ENCODE measurements at regions of chr22 and their contacts with region 1.

Region 1: GRCh38 chr22:32080904-32081303 is 37.8 kb downstream of the SLC5A1 start:
- DNase-seq: no peak
- ATAC-seq: peak; percentile 81 to 83 (median 81)
- H3K4me3 ChIP-seq: no peak overlapping the region
- H3K27ac ChIP-seq: no peak overlapping the region
- H3K4me1 ChIP-seq: peaks cover 17% of the 10 kb centered on the region
- H3K27me3 ChIP-seq: peaks cover 0 to 1% (median 0%) of the 10 kb centered on the region in 3 donors
- CTCF ChIP-seq: peak; percentile 78

Region 2: GRCh38 chr22:31970490-31971444 is 110.1 kb before region 1 on chr22:
- intact Hi-C with region 1: loop called in 1 of 2 experiments (anchors 2 kb)
- DNase-seq: peak; percentile 78 to 90
- ATAC-seq: peak; percentile 93 to 99 (median 96)
- H3K4me3 ChIP-seq: peak overlapping the region; percentile 67
- H3K27ac ChIP-seq: no peak overlapping the region
- H3K4me1 ChIP-seq: peaks cover 5% of the 10 kb centered on the region
- H3K27me3 ChIP-seq: no peaks in the 10 kb centered on the region
- CTCF ChIP-seq: peak; percentile 93

Region 3: GRCh38 chr22:31977141-31977841 is 103.6 kb before region 1 on chr22:
- intact Hi-C with region 1: loop called (anchors 1 to 2 kb)
- DNase-seq: peak; percentile 70 to 87
- ATAC-seq: peak; percentile 93 to 97 (median 95)
- H3K4me3 ChIP-seq: no peak overlapping the region
- H3K27ac ChIP-seq: no peak overlapping the region
- H3K4me1 ChIP-seq: no peaks in the 10 kb centered on the region
- H3K27me3 ChIP-seq: no peaks in the 10 kb centered on the region
- CTCF ChIP-seq: peak; percentile 76

Region 4: DNA sequence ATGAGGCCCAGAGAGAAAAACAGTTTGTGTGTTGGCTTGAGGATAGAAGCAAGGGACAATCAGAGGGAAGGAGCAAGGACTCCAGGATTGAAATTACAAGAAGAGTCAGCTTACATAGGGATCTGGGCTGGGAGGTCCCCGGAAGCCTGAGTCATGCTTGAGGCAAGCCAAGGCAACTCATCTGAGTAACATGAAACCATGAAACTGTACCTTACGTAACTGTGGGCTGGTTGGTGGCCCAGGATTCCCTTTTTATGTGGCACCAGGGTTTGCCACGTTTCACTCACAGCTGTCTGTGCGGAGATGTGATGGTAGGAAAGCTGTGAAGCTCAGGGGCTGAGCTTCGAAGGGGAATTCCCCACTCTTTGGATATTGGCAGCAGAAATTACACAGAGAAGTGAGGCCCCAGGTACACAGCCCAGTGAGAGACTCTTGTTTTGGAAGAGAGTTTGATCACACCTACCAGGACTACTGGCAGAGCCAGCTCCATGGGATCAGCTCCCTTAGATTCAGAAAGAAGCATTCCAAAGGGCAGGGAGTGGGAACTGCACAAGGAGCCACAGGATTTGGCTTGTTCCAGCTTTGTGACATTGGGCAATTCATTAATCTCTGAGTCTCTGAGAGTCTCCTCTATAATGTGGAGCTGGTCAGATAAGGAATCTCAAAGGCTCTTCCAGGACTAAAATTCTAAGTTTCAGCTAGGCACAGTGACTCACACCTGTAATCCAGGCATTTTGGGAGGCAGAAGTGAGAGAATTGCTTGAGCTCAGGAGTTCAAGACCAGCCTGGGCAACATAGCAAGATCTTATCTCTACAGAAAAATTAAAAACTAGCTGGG is 30.0 kb before region 1 on chr22:
- intact Hi-C with region 1: loop called in 1 of 2 experiments (anchors 2 kb)
- DNase-seq: peak; percentile 68 to 86
- ATAC-seq: peak; percentile 99
- H3K4me3 ChIP-seq: no peak overlapping the region
- H3K27ac ChIP-seq: peak overlapping the region; percentile 79
- H3K4me1 ChIP-seq: peaks cover 19% of the 10 kb centered on the region
- H3K27me3 ChIP-seq: no peaks in the 10 kb centered on the region
- CTCF ChIP-seq: no peak

Region 5: DNA sequence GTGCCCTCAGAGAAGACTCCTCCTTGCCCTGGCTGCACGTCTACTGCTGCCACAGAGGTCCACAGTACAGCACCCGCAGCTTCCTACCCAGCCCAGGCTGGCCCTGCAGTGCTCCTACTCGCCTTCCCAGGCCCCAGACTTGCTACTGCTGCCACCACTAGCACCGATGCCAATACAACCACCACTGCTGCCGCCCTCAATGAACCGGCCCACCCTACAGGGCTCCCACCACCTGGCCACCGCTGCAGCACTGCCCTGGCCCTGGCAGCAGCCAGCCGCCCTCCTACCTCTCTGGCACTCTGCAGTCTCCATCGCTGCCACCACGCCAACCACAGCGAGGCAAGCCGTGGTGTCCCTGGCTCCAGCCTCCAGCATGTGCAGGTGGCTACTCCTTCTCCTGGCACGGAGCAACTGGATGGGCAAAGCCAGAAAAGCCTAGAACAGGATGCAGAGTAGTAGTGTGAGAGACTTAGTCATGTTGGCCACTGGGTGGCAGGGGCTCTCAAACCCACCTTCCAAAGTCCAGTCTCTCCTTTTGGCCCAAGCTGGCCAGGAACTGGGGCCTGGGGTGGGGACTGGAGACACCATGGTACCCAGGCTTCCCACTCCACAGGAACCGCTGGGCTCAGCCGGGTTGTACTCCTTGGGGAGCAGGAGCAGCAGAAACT is 38.8 kb after region 1 on chr22:
- intact Hi-C with region 1: no loop called
- DNase-seq: no peak
- ATAC-seq: no peak
- H3K4me3 ChIP-seq: no peak overlapping the region
- H3K27ac ChIP-seq: no peak overlapping the region
- H3K4me1 ChIP-seq: no peaks in the 10 kb centered on the region
- H3K27me3 ChIP-seq: peaks cover 0 to 5% (median 1%) of the 10 kb centered on the region in 3 donors
- CTCF ChIP-seq: no peak

Measured in psoas muscle (tissue), 8 donors.